Naive thymus-derived CD4-positive, alpha-beta T cell (primary cell): ENCODE measurements at regions of chr18 and their contacts with region 1.

Region 1: DNA sequence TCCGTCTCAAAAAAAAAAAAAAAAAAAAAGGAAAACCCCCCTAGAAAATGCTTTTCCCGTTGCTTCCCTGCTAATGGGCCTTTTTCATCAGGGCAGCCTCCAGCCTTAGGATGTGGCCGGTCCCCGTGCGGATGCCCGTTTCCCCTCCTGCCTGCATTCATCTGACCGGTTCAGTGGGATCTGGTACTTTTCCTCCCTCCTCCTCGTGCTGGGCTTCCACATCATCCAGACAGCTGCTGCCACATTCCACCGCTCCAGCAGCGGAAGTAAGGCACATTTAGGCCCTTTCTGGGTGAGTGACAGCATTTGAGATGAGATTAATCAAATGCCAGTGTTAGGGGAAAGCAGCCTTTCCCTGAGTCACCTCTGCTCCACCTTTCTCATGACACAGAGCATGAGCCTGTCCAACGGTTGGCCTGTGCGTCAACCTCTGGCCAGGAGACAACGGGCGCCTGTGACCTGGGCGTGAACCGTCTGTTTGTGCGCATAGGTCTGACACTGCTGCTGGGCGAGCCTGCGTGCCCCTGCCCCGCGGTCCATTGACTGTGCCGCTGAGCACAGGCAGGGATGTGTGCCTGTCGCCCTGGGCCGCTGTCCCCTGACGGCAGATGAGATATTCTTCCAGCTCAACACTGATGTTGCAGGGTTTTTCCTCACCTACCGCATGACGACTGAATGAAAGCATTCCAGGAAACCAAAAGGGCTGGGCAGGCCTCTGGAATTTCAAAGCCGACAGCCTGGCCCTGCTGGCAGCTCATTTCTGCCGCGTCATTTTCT is 174.0 kb downstream of the TGIF1 start:
- DNase-seq: no peak
- ATAC-seq: no peak
- H3K4me3 ChIP-seq: no peak overlapping the region
- H3K4me3 Mint-ChIP-seq: peak overlapping the region in 1 of 10 donors; percentile 67
- H3K27ac ChIP-seq: no peak overlapping the region
- H3K27ac Mint-ChIP-seq: peak overlapping the region in 2 of 9 donors; percentile 32 to 77
- H3K4me1 ChIP-seq: peaks cover 9 to 12% of the 10 kb centered on the region in 2 donors
- H3K4me1 Mint-ChIP-seq: peaks cover 7 to 44% (median 14%) of the 10 kb centered on the region in 7 donors
- H3K27me3 ChIP-seq: no peaks in the 10 kb centered on the region
- H3K27me3 Mint-ChIP-seq: no peaks in the 10 kb centered on the region

Region 2: DNA sequence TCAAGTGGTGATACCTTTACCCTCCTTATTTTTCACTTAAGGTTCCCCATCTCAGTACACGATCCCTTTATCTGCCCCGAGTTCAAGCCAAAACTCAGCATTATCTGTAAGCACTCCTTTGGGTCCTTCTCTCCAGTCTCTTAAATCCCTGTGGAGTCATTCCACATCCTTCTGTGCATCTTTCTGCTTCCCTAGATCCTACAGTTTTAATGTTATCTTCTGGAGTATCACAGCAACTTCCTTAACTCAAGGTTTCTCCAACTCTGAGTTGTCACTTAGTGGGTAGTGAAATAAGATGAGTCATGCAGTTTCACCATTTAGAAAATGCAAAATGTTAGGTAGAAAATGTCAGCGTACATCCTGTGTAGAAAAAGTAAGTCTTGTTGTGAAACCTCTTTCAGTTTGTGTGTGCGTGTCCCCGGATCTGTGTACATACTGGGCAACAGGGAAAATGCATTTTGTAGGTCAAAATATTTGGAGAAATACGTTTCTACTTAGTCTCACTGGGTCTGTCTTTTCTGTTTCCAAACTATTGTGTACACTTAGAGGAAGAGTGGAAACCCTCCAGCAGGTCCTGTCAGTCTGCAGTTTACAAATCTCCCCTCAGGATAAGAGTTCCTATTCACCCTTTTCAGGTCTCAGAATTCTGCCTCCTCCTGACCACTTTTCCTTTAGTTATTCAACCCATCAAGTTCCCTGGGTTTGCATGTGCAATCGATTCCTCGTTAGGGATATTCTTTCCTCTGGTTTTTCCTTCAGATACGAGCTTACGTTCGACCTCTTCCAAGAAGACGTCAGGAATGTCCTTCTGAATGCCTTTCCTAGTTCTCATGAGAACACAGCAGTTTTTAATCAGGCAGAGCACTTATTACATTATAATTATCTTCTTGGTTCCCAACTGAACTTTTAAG is 19.2 kb before region 1 on chr18:
- CTCF ChIA-PET with region 1: no interaction called
- POLR2A ChIA-PET with region 1: no interaction called
- intact Hi-C with region 1: loop called (anchors 1 kb)
- DNase-seq: peak in 6 of 9 donors; percentile 20 to 55 (median 48)
- ATAC-seq: peak; percentile 71
- H3K4me3 ChIP-seq: peak overlapping the region; percentile 43
- H3K4me3 Mint-ChIP-seq: no peak overlapping the region
- H3K27ac ChIP-seq: peak overlapping the region; percentile 52
- H3K27ac Mint-ChIP-seq: no peak overlapping the region
- H3K4me1 ChIP-seq: peaks cover 32 to 38% of the 10 kb centered on the region in 2 donors
- H3K4me1 Mint-ChIP-seq: peaks cover 0 to 27% (median 7%) of the 10 kb centered on the region in 7 donors
- H3K27me3 ChIP-seq: no peaks in the 10 kb centered on the region
- H3K27me3 Mint-ChIP-seq: no peaks in the 10 kb centered on the region

Region 3: GRCh38 chr18:3660739-3661515 is 37.0 kb after region 1 on chr18:
- CTCF ChIA-PET with region 1: interaction called, 4 read pairs
- POLR2A ChIA-PET with region 1: no interaction called
- intact Hi-C with region 1: loop called in 1 of 2 experiments (anchors 1 kb)
- DNase-seq: no peak
- ATAC-seq: peak; percentile 75
- H3K4me3 ChIP-seq: no peak overlapping the region
- H3K4me3 Mint-ChIP-seq: peak overlapping the region in 1 of 10 donors; percentile 47
- H3K27ac ChIP-seq: no peak overlapping the region
- H3K27ac Mint-ChIP-seq: peak overlapping the region in 1 of 9 donors; percentile 88
- H3K4me1 ChIP-seq: no peaks in the 10 kb centered on the region
- H3K4me1 Mint-ChIP-seq: peaks cover 0 to 33% (median 5%) of the 10 kb centered on the region in 7 donors
- H3K27me3 ChIP-seq: no peaks in the 10 kb centered on the region
- H3K27me3 Mint-ChIP-seq: no peaks in the 10 kb centered on the region